ENCODE measurements at regions of chr7 and their contacts with region 1.

Region 1: GRCh38 chr7:25565949-25566348 is 337.7 kb upstream of the NPVF start:
- DNase-seq: peak in 1 of 2 experiments; percentile 59
- H3K4me3 ChIP-seq: no peak overlapping the region
- H3K4me3 Mint-ChIP-seq: no peak overlapping the region
- H3K27ac Mint-ChIP-seq: no peak overlapping the region
- H3K4me1 ChIP-seq: no peaks in the 10 kb centered on the region
- H3K4me1 Mint-ChIP-seq: peaks cover 6% of the 10 kb centered on the region
- H3K27me3 ChIP-seq: no peaks in the 10 kb centered on the region
- H3K27me3 Mint-ChIP-seq: peaks cover 13% of the 10 kb centered on the region
- CTCF ChIP-seq: peak; percentile 100

Region 2: GRCh38 chr7:25389489-25390106 is 176.4 kb before region 1 on chr7:
- CTCF ChIA-PET with region 1: interaction called, 11 read pairs
- POLR2A ChIA-PET with region 1: interaction called, 3 read pairs
- intact Hi-C with region 1: loop called (anchors 1 kb)
- DNase-seq: peak in 1 of 2 experiments; percentile 32
- H3K4me3 ChIP-seq: no peak overlapping the region
- H3K4me3 Mint-ChIP-seq: no peak overlapping the region
- H3K27ac Mint-ChIP-seq: no peak overlapping the region
- H3K4me1 ChIP-seq: no peaks in the 10 kb centered on the region
- H3K4me1 Mint-ChIP-seq: no peaks in the 10 kb centered on the region
- H3K27me3 ChIP-seq: no peaks in the 10 kb centered on the region
- H3K27me3 Mint-ChIP-seq: peaks cover 13% of the 10 kb centered on the region
- CTCF ChIP-seq: peak; percentile 35 to 45

Region 3: GRCh38 chr7:25545124-25546008 is 20.6 kb before region 1 on chr7:
- CTCF ChIA-PET with region 1: no interaction called
- POLR2A ChIA-PET with region 1: no interaction called
- intact Hi-C with region 1: no loop called
- DNase-seq: no peak
- H3K4me3 ChIP-seq: no peak overlapping the region
- H3K4me3 Mint-ChIP-seq: no peak overlapping the region
- H3K27ac Mint-ChIP-seq: no peak overlapping the region
- H3K4me1 ChIP-seq: no peaks in the 10 kb centered on the region
- H3K4me1 Mint-ChIP-seq: peaks cover 6% of the 10 kb centered on the region
- H3K27me3 ChIP-seq: peaks cover 4% of the 10 kb centered on the region
- H3K27me3 Mint-ChIP-seq: peaks cover 29% of the 10 kb centered on the region
- CTCF ChIP-seq: no peak

Region 4: GRCh38 chr7:27032839-27033238 is 1466.9 kb after region 1 on chr7:
- CTCF ChIA-PET with region 1: no interaction called
- POLR2A ChIA-PET with region 1: no interaction called
- intact Hi-C with region 1: no loop called
- DNase-seq: no peak
- H3K4me3 ChIP-seq: no peak overlapping the region
- H3K4me3 Mint-ChIP-seq: no peak overlapping the region
- H3K27ac Mint-ChIP-seq: no peak overlapping the region
- H3K4me1 ChIP-seq: peaks cover 19% of the 10 kb centered on the region
- H3K4me1 Mint-ChIP-seq: peaks cover 15% of the 10 kb centered on the region
- H3K27me3 ChIP-seq: no peaks in the 10 kb centered on the region
- H3K27me3 Mint-ChIP-seq: no peaks in the 10 kb centered on the region
- CTCF ChIP-seq: no peak